BJ (cell line): ENCODE measurements at regions of chr12 and their contacts with region 1.

Region 1: DNA sequence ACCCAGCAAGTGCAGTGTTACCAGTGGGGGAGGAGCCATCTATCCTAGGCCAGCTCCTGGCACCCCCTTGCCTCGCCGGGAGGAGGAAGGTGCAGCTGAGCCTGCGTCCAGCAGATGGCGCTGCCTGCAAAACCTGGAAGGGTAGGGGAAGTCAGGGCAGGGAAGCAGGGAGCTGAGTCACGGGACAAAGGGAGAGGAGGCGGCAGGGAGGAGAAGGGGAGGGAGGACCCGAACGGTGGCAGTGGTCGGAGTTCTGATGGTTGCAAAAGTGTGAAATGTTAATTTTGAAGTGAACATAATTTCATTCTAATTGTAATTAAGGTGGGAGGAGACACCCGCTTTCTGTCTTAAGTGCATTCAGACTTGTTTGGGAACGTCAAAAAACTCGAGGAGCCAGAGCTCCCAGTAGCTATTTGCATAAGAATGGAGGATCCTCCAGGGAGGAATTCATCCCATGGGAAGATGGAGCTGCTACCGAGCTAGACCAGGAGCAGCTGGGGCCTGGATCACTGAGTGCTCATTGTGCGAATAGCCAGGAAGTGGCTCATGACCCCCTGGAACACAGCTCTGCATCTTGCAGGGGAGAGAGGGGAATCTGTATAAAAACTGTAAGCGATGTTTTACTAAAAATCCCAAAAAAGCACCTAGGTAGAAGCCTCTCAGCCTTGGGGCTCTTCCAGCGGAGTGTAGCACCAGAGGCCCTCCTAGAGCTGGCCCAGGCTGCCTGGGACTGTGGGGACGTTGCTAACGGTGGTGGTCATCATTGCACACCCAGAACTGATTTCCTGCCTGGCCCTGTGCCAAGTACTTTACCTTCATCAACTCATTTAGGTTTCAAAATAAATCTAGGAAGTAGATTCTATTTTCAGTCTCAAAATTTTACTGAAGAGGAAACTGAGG is 59.5 kb downstream of the EMP1 start:
- DNase-seq: peak; percentile 60
- H3K4me3 ChIP-seq: peak overlapping the region; percentile 37
- H3K27me3 ChIP-seq: no peaks in the 10 kb centered on the region
- CTCF ChIP-seq: peak; percentile 100

Region 2: DNA sequence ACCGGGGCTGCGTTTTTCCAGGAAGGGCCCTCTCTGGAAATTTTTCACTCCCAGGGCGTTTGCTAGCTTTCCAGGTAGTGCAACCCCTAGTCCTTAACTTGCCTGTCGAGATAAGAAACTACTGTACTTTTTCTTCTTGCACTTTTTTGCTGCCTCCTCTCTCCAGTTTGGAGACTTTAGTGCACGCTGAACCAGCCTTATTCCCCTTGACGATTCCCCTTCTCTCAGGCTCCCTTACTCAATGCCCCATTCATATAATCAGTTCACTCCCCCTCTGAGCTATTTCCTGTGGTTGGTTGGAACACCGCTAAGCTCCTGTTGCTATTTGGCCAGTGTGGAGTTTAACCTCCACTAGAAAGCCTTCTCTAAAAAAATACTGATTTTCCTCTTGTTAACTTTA is 643.7 kb before region 1 on chr12:
- CTCF ChIA-PET with region 1: no interaction called
- POLR2A ChIA-PET with region 1: no interaction called
- DNase-seq: no peak
- H3K4me3 ChIP-seq: peak overlapping the region; percentile 85
- H3K27me3 ChIP-seq: no peaks in the 10 kb centered on the region
- CTCF ChIP-seq: no peak

Region 3: GRCh38 chr12:13241833-13242488 is 14.1 kb before region 1 on chr12:
- CTCF ChIA-PET with region 1: interaction called, 20 read pairs
- POLR2A ChIA-PET with region 1: no interaction called
- DNase-seq: no peak
- H3K4me3 ChIP-seq: no peak overlapping the region
- H3K27me3 ChIP-seq: no peaks in the 10 kb centered on the region
- CTCF ChIP-seq: no peak

Region 4: GRCh38 chr12:13270817-13271216 is 14.8 kb after region 1 on chr12:
- CTCF ChIA-PET with region 1: interaction called, 15 read pairs
- POLR2A ChIA-PET with region 1: no interaction called
- DNase-seq: no peak
- H3K4me3 ChIP-seq: no peak overlapping the region
- H3K27me3 ChIP-seq: peaks cover 28% of the 10 kb centered on the region
- CTCF ChIP-seq: no peak

Region 5: GRCh38 chr12:13278249-13278787 is 22.3 kb after region 1 on chr12:
- CTCF ChIA-PET with region 1: interaction called, 17 read pairs
- POLR2A ChIA-PET with region 1: no interaction called
- DNase-seq: no peak
- H3K4me3 ChIP-seq: no peak overlapping the region
- H3K27me3 ChIP-seq: peaks cover 21% of the 10 kb centered on the region
- CTCF ChIP-seq: peak; percentile 99

Region 6: DNA sequence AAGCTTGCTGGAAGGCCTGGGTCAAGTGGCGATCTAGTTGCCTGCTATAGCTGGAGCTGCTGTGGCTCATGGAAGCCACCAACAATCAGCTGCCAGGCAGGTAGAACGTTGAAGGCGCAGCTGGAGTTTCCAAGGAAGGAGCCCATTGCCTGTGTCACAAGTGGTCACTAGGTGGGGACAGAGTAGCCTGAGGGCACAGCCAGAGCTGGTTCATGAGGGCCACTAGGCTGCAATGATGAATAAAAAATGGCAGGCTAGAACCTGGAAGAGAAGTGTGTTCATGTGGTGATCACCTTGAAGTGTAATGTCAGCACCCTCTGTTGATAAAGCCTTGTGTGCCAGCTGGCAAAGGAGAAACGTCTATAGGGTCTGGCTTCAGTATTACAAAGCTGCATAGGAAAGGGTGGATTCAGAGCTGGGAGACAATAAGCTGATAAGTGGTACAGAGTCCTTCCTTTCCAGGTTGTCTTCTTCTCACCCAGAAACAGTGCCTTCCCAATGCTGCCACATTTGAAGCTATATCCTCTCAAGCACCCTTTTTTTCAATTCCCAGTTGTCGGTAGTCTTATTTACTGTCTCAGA is 106.3 kb after region 1 on chr12:
- CTCF ChIA-PET with region 1: interaction called, 10 read pairs
- POLR2A ChIA-PET with region 1: no interaction called
- DNase-seq: no peak
- H3K4me3 ChIP-seq: no peak overlapping the region
- H3K27me3 ChIP-seq: peaks cover 2% of the 10 kb centered on the region; the same call in 1 of the 2 replicates
- CTCF ChIP-seq: peak; percentile 89

Region 7: DNA sequence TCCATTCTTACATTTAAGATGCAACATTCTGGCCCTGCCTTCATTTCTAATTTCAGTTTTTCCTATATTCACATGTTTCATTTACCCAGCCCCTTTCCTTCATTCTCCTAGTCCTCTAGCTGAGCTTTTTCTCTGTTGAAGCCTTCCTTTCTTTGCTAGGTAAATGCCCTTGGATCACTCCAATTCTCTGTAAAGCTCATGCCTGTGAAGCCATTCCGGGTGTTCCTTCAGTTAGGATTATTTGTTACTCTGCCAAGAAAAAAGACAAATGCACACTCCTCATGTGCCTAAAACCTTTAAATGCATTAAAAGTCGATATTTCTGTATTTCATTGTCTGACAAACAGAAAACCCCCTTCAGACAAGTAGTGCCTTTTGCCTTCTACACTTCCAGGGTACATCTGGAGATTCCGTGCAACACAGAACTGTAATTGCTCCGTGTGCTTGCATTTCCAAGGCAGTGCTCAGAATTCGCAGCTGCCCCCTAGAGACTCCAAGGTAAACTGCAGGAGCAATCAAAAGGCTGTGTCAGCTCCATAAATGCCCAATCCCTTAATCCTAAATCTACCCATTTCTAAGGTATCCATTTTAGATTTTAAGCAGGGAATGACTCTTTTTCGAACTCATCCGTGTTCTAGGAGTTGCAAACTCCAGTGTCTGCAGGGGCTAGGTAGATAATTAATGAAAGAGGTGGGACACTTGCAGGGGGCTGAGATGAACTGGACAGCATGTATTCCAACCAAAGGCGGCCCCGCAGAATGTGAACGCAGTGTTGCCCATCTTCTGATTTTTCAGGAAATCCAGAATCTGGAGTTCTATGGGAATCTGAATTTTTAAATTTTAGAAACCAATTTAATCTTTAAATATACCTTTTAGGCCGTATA is 405.2 kb after region 1 on chr12:
- CTCF ChIA-PET with region 1: interaction called, 16 read pairs
- POLR2A ChIA-PET with region 1: no interaction called
- DNase-seq: peak; percentile 4
- H3K4me3 ChIP-seq: no peak overlapping the region
- H3K27me3 ChIP-seq: no peaks in the 10 kb centered on the region
- CTCF ChIP-seq: peak; percentile 91